CD14-positive monocyte (primary cell): ENCODE measurements at regions of chr9 and their contacts with region 1.

Region 1: DNA sequence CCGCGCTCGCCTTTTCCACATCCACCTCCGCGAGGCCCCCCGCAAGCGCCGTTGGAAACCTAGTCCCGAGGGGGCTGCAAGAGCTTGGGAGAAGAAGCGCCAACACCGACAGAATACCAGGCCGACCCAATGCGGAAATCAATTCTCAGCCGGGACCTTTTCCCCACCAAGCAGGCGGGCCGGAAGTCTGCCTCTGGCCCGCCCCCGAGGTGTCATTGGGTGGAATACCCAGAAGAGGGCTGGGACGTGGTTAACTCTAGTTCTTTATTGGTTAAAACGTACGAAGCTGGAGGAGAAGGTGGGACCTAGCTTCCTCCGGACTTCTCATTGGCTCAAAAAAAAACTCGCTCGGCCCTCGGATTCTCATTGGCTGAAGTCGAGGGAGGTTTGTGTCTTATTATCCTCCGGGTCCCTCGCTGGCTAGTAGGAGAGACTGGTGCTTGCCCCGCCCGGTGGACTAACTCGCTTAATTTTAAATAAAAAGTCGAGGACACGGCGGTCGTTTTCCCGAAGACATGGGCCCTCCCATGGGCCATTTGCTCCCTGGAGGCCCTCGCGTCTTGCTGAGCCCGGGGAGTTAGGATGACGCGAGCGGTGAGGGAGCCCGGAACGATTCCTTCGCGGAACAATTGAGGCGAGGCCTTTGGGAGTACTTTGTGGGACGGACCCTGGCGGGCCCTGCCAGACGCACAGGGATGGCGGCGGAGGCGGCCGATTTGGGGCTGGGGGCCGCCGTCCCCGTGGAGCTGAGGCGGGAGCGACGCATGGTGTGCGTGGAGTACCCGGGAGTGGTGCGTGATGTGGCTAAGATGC is at the start of gene GTF3C5:
- DNase-seq: peak; percentile 96 to 99 (median 97)
- H3K4me3 ChIP-seq: peak within 1 kb of the TSS; percentile 73 to 98 (median 82)
- H3K4me3 Mint-ChIP-seq: peak within 1 kb of the TSS; percentile 98 to 99
- H3K27ac ChIP-seq: peak within 1 kb of the TSS; percentile 64 to 97
- H3K27ac Mint-ChIP-seq: peak within 1 kb of the TSS; percentile 93 to 99 (median 97)
- H3K4me1 ChIP-seq: peaks cover 25 to 35% of the 10 kb centered on the region in 2 donors
- H3K4me1 Mint-ChIP-seq: peaks cover 40% of the 10 kb centered on the region
- H3K27me3 ChIP-seq: no peaks in the 10 kb centered on the region
- H3K27me3 Mint-ChIP-seq: peaks cover 0 to 5% (median 3%) of the 10 kb centered on the region in 3 donors
- CTCF ChIP-seq: no peak
- polyA plus RNA-seq, gene GTF3C5: 21.3 to 75.6 (median 24.4) TPM

Region 2: GRCh38 chr9:133060417-133060841 is 29.9 kb after region 1 on chr9:
- intact Hi-C with region 1: no loop called
- DNase-seq: no peak
- H3K4me3 ChIP-seq: no peak overlapping the region
- H3K4me3 Mint-ChIP-seq: no peak overlapping the region
- H3K27ac ChIP-seq: no peak overlapping the region
- H3K27ac Mint-ChIP-seq: peak overlapping the region in 1 of 7 donors; percentile 30
- H3K4me1 ChIP-seq: peaks cover 4 to 20% of the 10 kb centered on the region in 2 donors
- H3K4me1 Mint-ChIP-seq: peaks cover 31% of the 10 kb centered on the region
- H3K27me3 ChIP-seq: no peaks in the 10 kb centered on the region
- H3K27me3 Mint-ChIP-seq: peaks cover 3 to 8% (median 8%) of the 10 kb centered on the region in 3 donors
- CTCF ChIP-seq: no peak

Region 3: DNA sequence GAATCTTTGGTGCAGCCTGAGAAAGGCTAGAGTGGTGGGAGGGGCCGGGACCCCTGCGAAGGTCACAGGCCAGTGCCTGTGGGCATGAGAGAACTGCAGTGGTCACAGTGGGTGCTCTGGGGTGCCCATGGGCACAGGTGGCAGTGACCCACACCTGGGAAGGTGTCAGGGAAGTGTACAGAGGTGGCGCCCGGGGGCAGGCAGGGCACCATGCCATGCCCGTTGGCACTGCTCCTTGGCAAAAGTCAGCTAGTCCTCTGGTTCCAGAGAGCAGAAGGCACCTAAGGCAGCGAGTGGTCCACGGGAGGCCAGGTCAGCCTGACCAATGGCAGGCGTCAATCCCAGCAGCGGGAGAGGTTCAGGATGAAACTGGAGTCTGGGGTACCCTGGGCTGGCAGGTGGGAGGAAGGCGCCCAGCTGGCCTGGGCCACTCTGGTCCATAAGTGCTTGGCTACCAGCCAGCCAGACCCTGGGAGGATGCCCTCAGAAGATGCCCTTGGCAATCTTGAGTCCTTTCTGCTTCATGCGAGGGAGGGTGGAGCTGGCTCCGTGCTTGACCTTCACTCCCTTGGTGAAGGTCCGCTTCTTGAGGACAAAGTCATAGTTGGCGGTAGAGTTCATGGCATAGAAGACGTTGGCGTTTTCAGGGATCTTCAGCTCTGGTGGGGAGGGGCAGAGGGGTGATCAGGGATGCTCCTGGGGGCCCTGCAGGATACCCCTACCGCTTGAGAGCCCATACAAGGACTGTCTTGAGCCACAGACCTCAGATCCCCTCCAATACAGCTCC is 67.8 kb after region 1 on chr9:
- intact Hi-C with region 1: loop called in 1 of 2 experiments (anchors 5 kb)
- DNase-seq: no peak
- H3K4me3 ChIP-seq: no peak overlapping the region
- H3K4me3 Mint-ChIP-seq: no peak overlapping the region
- H3K27ac ChIP-seq: no peak overlapping the region
- H3K27ac Mint-ChIP-seq: no peak overlapping the region
- H3K4me1 ChIP-seq: no peaks in the 10 kb centered on the region
- H3K4me1 Mint-ChIP-seq: no peaks in the 10 kb centered on the region
- H3K27me3 ChIP-seq: no peaks in the 10 kb centered on the region
- H3K27me3 Mint-ChIP-seq: peaks cover 0 to 5% (median 0%) of the 10 kb centered on the region in 3 donors
- CTCF ChIP-seq: no peak

Region 4: DNA sequence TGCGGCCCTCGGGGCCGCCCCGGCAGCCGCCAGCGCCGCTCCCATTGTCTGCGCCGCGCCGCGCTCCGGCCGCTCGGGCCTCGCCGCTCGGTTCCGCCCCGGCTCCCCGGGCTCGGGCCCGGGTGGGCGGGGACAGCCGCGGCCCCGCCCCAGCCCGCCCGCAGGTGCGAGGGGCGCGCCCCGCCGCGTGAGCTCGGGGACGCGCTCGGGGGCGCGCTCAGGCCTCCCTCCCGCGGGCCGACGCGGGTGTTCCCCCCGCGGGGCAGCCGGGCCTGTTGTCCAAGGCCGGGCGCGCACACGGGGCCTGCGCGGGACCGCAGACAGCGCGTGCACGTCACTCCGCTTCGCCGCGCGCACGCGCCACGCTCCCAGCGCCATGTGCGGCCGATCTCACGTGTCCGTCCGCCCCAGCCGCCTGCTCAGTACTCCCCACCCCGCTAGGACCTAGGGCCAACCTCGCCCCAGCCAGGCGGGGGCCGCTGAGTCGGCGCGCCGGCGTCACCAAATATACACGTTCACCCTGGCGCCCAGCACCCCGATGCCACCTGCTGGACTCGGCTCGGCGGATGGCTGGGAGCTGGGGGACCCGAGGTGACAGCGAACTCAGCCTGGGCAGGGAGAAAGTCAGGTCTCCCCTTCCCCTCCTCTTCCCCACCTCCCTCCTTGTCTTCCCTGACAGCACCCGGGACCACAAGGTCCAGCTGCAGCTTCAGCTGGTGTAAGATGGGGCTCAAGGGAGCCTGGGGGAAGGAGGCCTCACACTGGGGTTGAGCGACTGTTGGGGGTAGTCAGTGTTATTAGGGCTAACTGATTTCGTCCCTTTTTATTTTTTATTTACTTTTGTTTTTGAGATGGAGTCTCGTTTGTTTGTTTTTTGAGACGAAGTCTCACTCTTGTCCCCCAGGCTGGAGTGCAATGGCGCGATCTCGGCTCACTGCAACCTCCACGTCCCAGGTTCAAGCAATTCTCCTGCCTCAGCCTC is 118.9 kb after region 1 on chr9:
- intact Hi-C with region 1: loop called (anchors 5 kb)
- DNase-seq: peak; percentile 89 to 94 (median 90)
- H3K4me3 ChIP-seq: peak overlapping the region; percentile 18 to 58 (median 19)
- H3K4me3 Mint-ChIP-seq: peak overlapping the region; percentile 67 to 71
- H3K27ac ChIP-seq: peak overlapping the region; percentile 43 to 46
- H3K27ac Mint-ChIP-seq: peak overlapping the region in 4 of 7 donors; percentile 24 to 61 (median 36)
- H3K4me1 ChIP-seq: peaks cover 25 to 32% of the 10 kb centered on the region in 2 donors
- H3K4me1 Mint-ChIP-seq: peaks cover 31% of the 10 kb centered on the region
- H3K27me3 ChIP-seq: no peaks in the 10 kb centered on the region
- H3K27me3 Mint-ChIP-seq: peaks cover 4 to 18% (median 4%) of the 10 kb centered on the region in 3 donors
- CTCF ChIP-seq: peak; percentile 44

Region 5: GRCh38 chr9:133342069-133342406 is 311.5 kb after region 1 on chr9:
- intact Hi-C with region 1: loop called in 1 of 2 experiments (anchors 5 kb)
- DNase-seq: no peak
- H3K4me3 ChIP-seq: peak overlapping the region in 1 of 3 experiments; percentile 74
- H3K4me3 Mint-ChIP-seq: peak overlapping the region; percentile 73 to 88
- H3K27ac ChIP-seq: peak overlapping the region; percentile 74 to 83
- H3K27ac Mint-ChIP-seq: peak overlapping the region; percentile 82 to 93 (median 92)
- H3K4me1 ChIP-seq: peaks cover 57 to 59% of the 10 kb centered on the region in 2 donors
- H3K4me1 Mint-ChIP-seq: peaks cover 59% of the 10 kb centered on the region
- H3K27me3 ChIP-seq: no peaks in the 10 kb centered on the region
- H3K27me3 Mint-ChIP-seq: no peaks in the 10 kb centered on the region
- CTCF ChIP-seq: peak; percentile 35

Region 6: DNA sequence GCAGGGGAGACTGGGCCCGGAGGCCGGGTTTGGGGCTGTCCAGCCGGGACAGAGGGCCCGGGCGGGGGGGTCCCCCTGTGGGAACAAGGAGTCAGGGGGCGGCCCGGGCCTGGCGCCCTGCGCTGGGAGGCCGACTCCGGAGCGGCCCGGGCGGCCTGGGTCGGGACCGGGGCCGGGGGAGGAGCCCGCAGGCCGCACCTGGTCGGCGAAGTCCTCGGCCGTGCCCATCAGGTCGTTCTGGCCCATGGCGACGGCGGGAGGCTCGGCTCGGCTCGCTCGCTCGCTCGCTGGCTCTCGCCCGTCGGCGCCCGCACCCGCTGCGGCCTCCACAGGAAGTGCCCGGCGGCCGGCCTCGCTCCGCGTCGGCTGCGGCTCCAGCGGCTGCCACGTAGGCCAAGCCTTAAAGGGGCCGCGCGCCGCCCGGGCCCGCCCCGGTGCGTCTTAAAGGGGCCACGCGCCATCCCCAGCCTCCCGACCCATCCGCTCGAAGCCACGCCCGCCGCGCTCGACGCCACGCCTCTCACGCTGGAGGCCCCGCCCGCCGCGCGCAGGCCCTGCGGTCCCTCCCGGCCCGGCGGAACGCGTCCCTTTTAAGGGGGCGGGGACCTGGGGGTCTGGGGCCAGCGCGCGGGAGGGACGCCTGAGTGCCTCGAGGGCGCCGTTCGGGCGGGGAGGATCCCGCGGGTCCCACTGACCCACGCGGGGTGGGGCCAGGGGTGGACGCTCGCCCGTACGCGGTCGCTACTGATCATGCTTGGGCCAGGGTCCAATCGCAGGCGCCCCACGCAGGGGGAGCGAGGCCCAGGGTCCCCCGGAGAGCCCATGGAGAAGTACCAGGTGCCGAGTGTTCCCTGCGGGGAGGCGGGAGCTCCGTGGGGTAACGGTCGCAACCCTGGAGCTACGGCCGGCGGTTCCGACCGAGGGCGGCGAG is 345.5 kb after region 1 on chr9 and contains the starts of genes STKLD1 and SURF4:
- intact Hi-C with region 1: loop called in 1 of 2 experiments (anchors 10 kb)
- DNase-seq: peak; percentile 89 to 93 (median 90)
- H3K4me3 ChIP-seq: peak within 1 kb of the TSS; percentile 65 to 95 (median 86)
- H3K4me3 Mint-ChIP-seq: peak within 1 kb of the TSS; percentile 94 to 97
- H3K27ac ChIP-seq: peak within 1 kb of the TSS; percentile 71 to 83
- H3K27ac Mint-ChIP-seq: peak within 1 kb of the TSS; percentile 89 to 96 (median 94)
- H3K4me1 ChIP-seq: peaks cover 21 to 56% of the 10 kb centered on the region in 2 donors
- H3K4me1 Mint-ChIP-seq: peaks cover 54% of the 10 kb centered on the region
- H3K27me3 ChIP-seq: no peaks in the 10 kb centered on the region
- H3K27me3 Mint-ChIP-seq: peaks cover 0 to 5% (median 3%) of the 10 kb centered on the region in 3 donors
- CTCF ChIP-seq: no peak
- polyA plus RNA-seq, gene STKLD1: 0.27 TPM in 1 of 3 donors, not detected in the others
- polyA plus RNA-seq, gene SURF4: 61.4 to 175 (median 157) TPM